ENCODE measurements at regions of chr17 and their contacts with region 1.

Region 1: GRCh38 chr17:76506408-76507349 is 5.5 kb upstream of the RHBDF2 start:
- DNase-seq: peak; percentile 89
- H3K4me3 ChIP-seq: no peak overlapping the region
- H3K27ac ChIP-seq: no peak overlapping the region
- H3K4me1 ChIP-seq: peaks cover 8% of the 10 kb centered on the region
- H3K27me3 ChIP-seq: no peaks in the 10 kb centered on the region
- CTCF ChIP-seq: peak; percentile 91 to 99 (median 98)
- POLR2A ChIP-seq: no peak

Region 2: GRCh38 chr17:76467366-76467765 is 39.3 kb before region 1 on chr17 and contains the start of gene AANAT:
- intact Hi-C with region 1: loop called (anchors 5 kb)
- DNase-seq: no peak
- H3K4me3 ChIP-seq: no peak within 1 kb of the TSS
- H3K27ac ChIP-seq: no peak within 1 kb of the TSS
- H3K4me1 ChIP-seq: no peaks in the 10 kb centered on the region
- H3K27me3 ChIP-seq: no peaks in the 10 kb centered on the region
- CTCF ChIP-seq: no peak
- POLR2A ChIP-seq: no peak
- total RNA-seq, gene AANAT: 2.0 to 4.3 TPM

Measured in testis (tissue), 5 donors.